Adrenal gland (tissue), 19 donors: ENCODE measurements at regions of chr14 and their contacts with region 1.

Region 1: GRCh38 chr14:21557084-21557901 is 22.6 kb downstream of the OR10G3 start:
- DNase-seq: peak; percentile 74 to 92 (median 78)
- H3K4me3 ChIP-seq: peak overlapping the region in 1 of 4 donors; percentile 41
- H3K27ac ChIP-seq: peak overlapping the region in 3 of 5 donors; percentile 10 to 74 (median 52)
- H3K4me1 ChIP-seq: peaks cover 0 to 14% of the 10 kb centered on the region in 2 donors
- H3K27me3 ChIP-seq: no peaks in the 10 kb centered on the region
- CTCF ChIP-seq: peak; percentile 69 to 92 (median 72)
- POLR2A ChIP-seq: no peak

Region 2: DNA sequence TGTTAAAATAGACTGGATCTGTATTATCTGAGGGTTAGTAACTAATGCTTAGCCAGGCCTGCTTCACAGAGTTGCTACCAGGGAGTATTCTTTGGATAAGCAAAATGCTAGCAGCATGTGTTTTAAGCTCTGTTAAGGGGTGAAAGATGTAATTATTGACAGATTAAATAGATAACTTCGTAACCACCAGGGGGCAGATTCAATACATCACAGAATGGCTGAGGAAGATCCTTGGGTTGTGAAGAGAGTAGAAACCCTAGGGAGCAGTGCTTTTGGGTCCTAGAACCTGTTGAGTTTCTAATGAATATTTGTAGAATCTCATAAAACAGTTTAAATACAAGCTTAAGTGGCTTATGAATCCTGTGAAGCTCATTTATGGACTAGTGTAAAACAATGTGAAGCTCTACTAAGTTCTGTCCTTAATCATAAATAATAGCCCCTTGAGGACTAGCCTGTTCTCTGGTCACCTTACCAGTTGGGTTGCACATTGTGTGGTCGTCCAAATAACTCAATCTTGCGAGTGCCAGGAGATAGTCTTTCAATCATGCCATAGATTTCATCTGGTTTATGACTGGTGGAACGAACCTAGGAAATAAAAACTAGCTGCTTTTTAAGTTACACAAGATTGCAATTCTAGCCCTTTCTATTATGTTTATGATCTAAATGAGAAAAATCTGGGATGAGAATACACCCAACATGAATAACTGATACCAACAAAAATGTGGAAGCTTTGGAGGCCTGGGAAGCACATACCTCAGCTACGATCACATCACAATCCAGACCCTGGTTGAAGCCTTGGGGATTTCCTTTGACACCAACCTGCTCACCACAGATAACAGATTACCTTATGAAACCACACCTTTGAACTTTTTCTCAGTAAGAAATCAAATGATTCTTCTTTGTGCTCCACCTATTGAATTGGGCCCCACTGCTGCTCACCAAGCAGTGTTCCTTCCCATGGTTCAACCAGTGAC is 58.5 kb before region 1 on chr14:
- intact Hi-C with region 1: loop called (anchors 5 to 10 kb)
- DNase-seq: peak in 2 of 7 donors; percentile 20 to 27
- H3K4me3 ChIP-seq: no peak overlapping the region
- H3K27ac ChIP-seq: no peak overlapping the region
- H3K4me1 ChIP-seq: no peaks in the 10 kb centered on the region
- H3K27me3 ChIP-seq: no peaks in the 10 kb centered on the region
- CTCF ChIP-seq: peak; percentile 31 to 60 (median 51)
- POLR2A ChIP-seq: no peak

Region 3: DNA sequence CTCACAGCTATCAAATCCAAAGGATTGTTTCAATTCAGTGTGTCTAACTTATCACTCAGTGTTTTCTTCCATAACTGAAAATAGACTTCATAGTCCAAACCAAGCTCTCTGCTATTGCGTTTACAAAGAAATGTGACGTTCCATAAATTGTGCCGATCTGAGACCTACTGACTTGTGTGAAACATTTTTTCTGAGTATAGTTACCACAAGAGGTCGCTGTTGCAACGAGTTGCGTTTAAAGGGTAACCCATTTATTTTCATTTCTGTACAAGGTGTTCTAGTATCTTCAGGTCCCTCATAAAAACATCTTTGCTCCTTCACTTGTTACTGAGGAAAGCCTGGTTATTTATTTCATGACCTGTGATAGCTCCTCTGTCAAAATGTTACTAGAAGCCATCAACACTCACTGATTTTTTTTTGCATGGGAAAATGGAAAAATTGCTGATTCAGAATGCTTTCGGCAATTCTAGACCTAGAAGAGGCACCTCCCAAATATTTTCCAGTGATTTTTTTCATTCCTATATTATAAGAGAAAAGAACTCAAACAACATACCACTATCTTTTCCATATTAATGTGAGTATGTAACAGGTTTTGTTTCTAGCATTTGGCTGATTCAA is 177.3 kb after region 1 on chr14:
- intact Hi-C with region 1: no loop called
- DNase-seq: peak in 1 of 7 donors; percentile 1
- H3K4me3 ChIP-seq: no peak overlapping the region
- H3K27ac ChIP-seq: no peak overlapping the region
- H3K4me1 ChIP-seq: no peaks in the 10 kb centered on the region
- H3K27me3 ChIP-seq: no peaks in the 10 kb centered on the region
- CTCF ChIP-seq: peak in 2 of 6 experiments; percentile 29 to 44
- POLR2A ChIP-seq: no peak

Region 4: DNA sequence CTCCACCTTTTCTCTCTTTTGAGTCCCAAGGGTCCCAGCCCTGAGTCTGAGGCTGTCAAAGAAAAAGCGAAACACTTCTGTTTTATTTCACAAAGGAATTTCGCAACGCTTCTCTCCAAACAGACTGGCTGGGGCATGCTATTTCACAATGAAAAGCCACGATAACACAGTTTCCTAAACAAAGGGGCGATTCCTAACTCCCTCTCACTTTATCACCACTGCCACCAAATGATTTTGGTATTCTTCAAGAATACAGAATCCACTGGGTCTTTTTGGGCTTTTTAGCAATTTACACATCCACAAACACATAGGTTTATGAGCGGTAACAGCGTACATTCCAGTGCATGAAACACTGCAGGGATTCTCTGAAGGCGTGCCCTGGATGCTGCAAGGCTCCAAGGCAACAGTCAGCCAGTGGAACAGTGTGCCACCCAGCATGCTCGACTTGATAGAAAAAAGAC is 870.5 kb after region 1 on chr14:
- intact Hi-C with region 1: no loop called
- DNase-seq: peak in 6 of 7 donors; percentile 30 to 62 (median 50)
- H3K4me3 ChIP-seq: no peak overlapping the region
- H3K27ac ChIP-seq: peak overlapping the region in 1 of 5 donors; percentile 27
- H3K4me1 ChIP-seq: peaks cover 0 to 36% of the 10 kb centered on the region in 2 donors
- H3K27me3 ChIP-seq: no peaks in the 10 kb centered on the region
- CTCF ChIP-seq: no peak
- POLR2A ChIP-seq: no peak